Testis (tissue), 5 donors: ENCODE measurements at regions of chr13 and their contacts with region 1.

Region 1: GRCh38 chr13:95624020-95624419 is 20.5 kb downstream of the DZIP1 start:
- DNase-seq: no peak
- H3K4me3 ChIP-seq: no peak overlapping the region
- H3K27ac ChIP-seq: no peak overlapping the region
- H3K4me1 ChIP-seq: no peaks in the 10 kb centered on the region
- H3K27me3 ChIP-seq: no peaks in the 10 kb centered on the region
- CTCF ChIP-seq: peak in 2 of 3 experiments; percentile 41 to 63
- POLR2A ChIP-seq: no peak

Region 2: DNA sequence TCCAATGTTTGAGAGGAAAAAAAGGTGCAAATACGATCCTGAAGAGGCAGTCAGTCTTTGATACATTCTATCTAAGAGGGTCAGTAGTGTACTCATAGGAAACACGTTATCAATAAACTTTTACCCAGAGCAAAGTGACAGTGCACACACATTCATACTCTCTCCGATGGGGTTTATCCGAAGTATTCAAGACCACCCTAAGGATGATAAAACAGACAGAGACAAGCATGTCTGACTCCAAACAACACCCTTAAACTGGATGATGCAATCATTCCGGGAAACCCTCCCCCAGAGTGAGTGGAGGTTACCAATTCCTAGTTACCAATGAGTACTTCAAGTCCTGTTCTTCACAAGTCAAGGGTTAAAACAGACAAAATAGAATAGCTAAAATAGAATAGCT is 132.1 kb after region 1 on chr13:
- intact Hi-C with region 1: no loop called
- DNase-seq: no peak
- H3K4me3 ChIP-seq: no peak overlapping the region
- H3K27ac ChIP-seq: no peak overlapping the region
- H3K4me1 ChIP-seq: no peaks in the 10 kb centered on the region
- H3K27me3 ChIP-seq: no peaks in the 10 kb centered on the region
- CTCF ChIP-seq: no peak
- POLR2A ChIP-seq: no peak

Region 3: DNA sequence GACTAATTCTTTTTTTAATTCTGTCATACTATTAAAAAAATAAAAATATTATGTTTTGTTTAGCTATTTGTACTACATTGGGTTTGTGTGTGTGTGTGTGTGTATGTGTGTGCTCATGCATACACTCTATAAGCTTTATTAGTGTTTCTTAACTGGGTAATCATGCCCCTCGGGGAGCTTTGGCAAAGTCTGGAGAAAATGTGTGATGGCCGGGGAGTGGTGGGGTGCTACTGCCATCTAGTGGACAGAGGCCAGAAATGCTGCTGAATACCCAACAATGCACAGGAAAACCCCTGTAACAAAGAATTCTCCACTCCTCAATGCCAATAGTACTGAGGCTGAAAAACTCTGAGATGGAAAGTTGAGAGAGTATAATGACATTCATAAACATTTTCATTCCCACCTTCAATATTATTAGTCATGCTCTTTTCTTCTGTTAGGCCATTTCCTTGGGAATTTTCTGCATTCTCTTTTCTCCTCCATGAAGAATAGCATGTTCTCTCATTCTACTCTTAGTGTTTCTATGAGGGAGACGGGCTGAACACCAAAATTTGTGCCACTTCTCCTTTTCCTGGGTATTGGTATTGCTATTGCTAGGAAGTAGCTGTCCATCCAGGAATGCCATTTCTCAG is 210.2 kb after region 1 on chr13:
- intact Hi-C with region 1: loop called (anchors 10 kb)
- DNase-seq: peak; percentile 68
- H3K4me3 ChIP-seq: no peak overlapping the region
- H3K27ac ChIP-seq: no peak overlapping the region
- H3K4me1 ChIP-seq: no peaks in the 10 kb centered on the region
- H3K27me3 ChIP-seq: no peaks in the 10 kb centered on the region
- CTCF ChIP-seq: peak; percentile 56 to 87 (median 80)
- POLR2A ChIP-seq: no peak

Region 4: GRCh38 chr13:96238861-96239626 is 615.0 kb after region 1 on chr13:
- intact Hi-C with region 1: no loop called
- DNase-seq: no peak
- H3K4me3 ChIP-seq: no peak overlapping the region
- H3K27ac ChIP-seq: no peak overlapping the region
- H3K4me1 ChIP-seq: no peaks in the 10 kb centered on the region
- H3K27me3 ChIP-seq: no peaks in the 10 kb centered on the region
- CTCF ChIP-seq: no peak
- POLR2A ChIP-seq: no peak